Activated CD8-positive, alpha-beta T cell treated with anti-CD3 and anti-CD28 coated beads for 36 hours (primary cell): ENCODE measurements at regions of chr3 and their contacts with region 1.

Region 1: GRCh38 chr3:184174646-184175492 is at the start of gene AP2M1:
- DNase-seq: peak; percentile 99
- ATAC-seq: peak; percentile 97
- H3K4me3 Mint-ChIP-seq: peak within 1 kb of the TSS; percentile 85
- H3K27ac Mint-ChIP-seq: peak within 1 kb of the TSS; percentile 88
- H3K4me1 Mint-ChIP-seq: peaks cover 29% of the 10 kb centered on the region
- H3K27me3 Mint-ChIP-seq: no peaks in the 10 kb centered on the region
- CTCF ChIP-seq: no peak
- total RNA-seq, gene AP2M1: 211 to 223 TPM

Region 2: GRCh38 chr3:184058029-184058428 is 116.8 kb before region 1 on chr3:
- CTCF ChIA-PET with region 1: no interaction called
- POLR2A ChIA-PET with region 1: no interaction called
- intact Hi-C with region 1: no loop called
- DNase-seq: no peak
- ATAC-seq: no peak
- H3K4me3 Mint-ChIP-seq: no peak overlapping the region
- H3K27ac Mint-ChIP-seq: no peak overlapping the region
- H3K4me1 Mint-ChIP-seq: no peaks in the 10 kb centered on the region
- H3K27me3 Mint-ChIP-seq: no peaks in the 10 kb centered on the region
- CTCF ChIP-seq: no peak

Region 3: DNA sequence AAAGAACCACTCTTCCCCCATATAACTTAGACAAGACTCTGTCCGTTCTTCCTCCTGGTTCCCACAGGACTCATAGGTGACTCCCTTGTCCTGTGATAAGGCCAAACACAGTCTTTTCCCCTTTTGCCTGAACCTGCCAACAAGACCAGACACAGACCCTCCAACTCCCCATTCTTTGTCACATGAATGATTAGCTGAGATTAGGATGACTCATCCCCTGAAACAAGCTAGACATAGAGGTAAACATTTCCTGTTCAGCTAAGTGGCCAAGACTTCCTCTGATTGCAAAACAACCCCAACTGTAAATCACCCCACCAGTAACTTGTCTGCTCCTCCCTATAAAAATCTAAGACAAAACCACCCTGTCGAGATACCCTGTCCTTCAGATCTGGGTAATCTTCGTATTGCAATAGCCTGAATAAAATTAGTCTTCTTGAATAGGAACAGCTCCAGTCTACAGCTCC is 89.4 kb before region 1 on chr3:
- CTCF ChIA-PET with region 1: no interaction called
- POLR2A ChIA-PET with region 1: no interaction called
- intact Hi-C with region 1: no loop called
- DNase-seq: no peak
- ATAC-seq: peak; percentile 64
- H3K4me3 Mint-ChIP-seq: no peak overlapping the region
- H3K27ac Mint-ChIP-seq: no peak overlapping the region
- H3K4me1 Mint-ChIP-seq: peaks cover 6% of the 10 kb centered on the region
- H3K27me3 Mint-ChIP-seq: no peaks in the 10 kb centered on the region
- CTCF ChIP-seq: no peak

Region 4: GRCh38 chr3:184185461-184186308 is 10.8 kb after region 1 on chr3 and contains the start of gene ABCF3:
- CTCF ChIA-PET with region 1: interaction called, 4 read pairs
- POLR2A ChIA-PET with region 1: interaction called, 12 read pairs
- intact Hi-C with region 1: no loop called
- DNase-seq: peak; percentile 99
- ATAC-seq: peak; percentile 96
- H3K4me3 Mint-ChIP-seq: peak within 1 kb of the TSS; percentile 94
- H3K27ac Mint-ChIP-seq: peak within 1 kb of the TSS; percentile 96
- H3K4me1 Mint-ChIP-seq: peaks cover 31% of the 10 kb centered on the region
- H3K27me3 Mint-ChIP-seq: no peaks in the 10 kb centered on the region
- CTCF ChIP-seq: no peak
- total RNA-seq, gene ABCF3: 61.3 to 68.7 TPM

Region 5: DNA sequence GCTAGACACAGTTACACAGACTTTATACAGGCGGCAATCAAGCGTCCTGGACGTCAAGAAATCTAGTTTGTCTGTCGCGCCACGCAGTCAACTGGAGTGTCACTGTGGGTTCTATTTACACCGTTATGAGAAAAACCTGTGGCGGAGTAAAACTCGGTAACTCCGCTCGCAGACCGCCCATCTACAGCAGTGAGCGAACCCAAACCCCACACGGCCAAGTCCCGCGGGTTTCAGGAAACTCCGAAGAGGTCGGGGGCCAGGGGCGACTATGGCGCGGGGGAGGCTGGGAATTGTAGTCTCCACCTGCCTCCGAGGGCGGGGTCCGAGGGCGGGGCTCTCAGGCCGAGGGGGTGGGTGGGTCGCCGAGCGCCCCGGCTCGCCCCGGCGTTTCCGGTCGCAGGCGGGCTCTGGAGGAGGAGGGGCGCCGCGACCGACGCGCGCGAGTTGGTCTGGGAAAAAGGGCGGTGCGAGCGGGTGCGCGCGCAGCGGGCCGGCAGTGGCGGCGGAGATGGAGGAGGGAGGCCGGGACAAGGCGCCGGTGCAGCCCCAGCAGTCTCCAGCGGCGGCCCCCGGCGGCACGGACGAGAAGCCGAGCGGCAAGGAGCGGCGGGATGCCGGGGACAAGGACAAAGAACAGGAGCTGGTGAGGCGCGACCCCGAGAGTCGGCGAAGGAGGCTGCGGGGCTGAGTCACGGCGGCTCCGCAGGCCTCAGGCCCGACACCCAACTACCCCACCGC is 124.1 kb after region 1 on chr3 and contains the start of gene PSMD2:
- CTCF ChIA-PET with region 1: no interaction called
- POLR2A ChIA-PET with region 1: interaction called, 3 read pairs
- intact Hi-C with region 1: loop called (anchors 2 kb)
- DNase-seq: peak; percentile 99
- ATAC-seq: peak; percentile 96
- H3K4me3 Mint-ChIP-seq: peak within 1 kb of the TSS; percentile 79
- H3K27ac Mint-ChIP-seq: peak within 1 kb of the TSS; percentile 91
- H3K4me1 Mint-ChIP-seq: peaks cover 24% of the 10 kb centered on the region
- H3K27me3 Mint-ChIP-seq: no peaks in the 10 kb centered on the region
- CTCF ChIP-seq: no peak
- total RNA-seq, gene PSMD2: 220 to 221 TPM